Right lobe of liver (tissue), 6 donors: ENCODE measurements at regions of chr16 and their contacts with region 1.

Region 1: DNA sequence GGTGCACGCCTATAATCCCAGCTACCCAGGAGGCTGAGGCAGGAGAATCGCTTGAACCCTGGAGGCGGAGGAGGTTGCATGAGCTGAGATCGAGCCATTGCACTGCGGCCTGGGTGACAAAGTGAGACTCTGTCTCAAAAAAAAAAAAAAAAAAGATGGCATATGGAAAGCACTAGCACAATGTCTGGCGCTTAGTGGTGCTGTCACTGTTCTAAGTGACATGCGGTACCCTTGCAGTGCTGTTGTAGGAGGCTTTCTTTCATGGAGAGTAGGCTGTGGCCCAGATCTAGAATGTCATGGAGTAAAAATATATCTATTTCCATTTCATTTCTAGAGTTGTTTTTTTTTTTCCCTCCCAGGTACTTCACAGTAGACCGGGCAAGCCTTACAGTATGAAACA is 14.6 kb upstream of the METTL9 start:
- DNase-seq: no peak
- ATAC-seq: no peak
- H3K4me3 ChIP-seq: no peak overlapping the region
- H3K27ac ChIP-seq: no peak overlapping the region
- H3K4me1 ChIP-seq: no peaks in the 10 kb centered on the region
- H3K27me3 ChIP-seq: no peaks in the 10 kb centered on the region
- CTCF ChIP-seq: no peak
- POLR2A ChIP-seq: no peak

Region 2: GRCh38 chr16:21638573-21638975 is 53.8 kb after region 1 on chr16:
- intact Hi-C with region 1: loop called (anchors 5 to 10 kb)
- DNase-seq: no peak
- ATAC-seq: peak; percentile 40 to 74 (median 58)
- H3K4me3 ChIP-seq: no peak overlapping the region
- H3K27ac ChIP-seq: no peak overlapping the region
- H3K4me1 ChIP-seq: peaks cover 0 to 12% (median 0%) of the 10 kb centered on the region in 4 donors
- H3K27me3 ChIP-seq: no peaks in the 10 kb centered on the region
- CTCF ChIP-seq: no peak
- POLR2A ChIP-seq: no peak

Region 3: DNA sequence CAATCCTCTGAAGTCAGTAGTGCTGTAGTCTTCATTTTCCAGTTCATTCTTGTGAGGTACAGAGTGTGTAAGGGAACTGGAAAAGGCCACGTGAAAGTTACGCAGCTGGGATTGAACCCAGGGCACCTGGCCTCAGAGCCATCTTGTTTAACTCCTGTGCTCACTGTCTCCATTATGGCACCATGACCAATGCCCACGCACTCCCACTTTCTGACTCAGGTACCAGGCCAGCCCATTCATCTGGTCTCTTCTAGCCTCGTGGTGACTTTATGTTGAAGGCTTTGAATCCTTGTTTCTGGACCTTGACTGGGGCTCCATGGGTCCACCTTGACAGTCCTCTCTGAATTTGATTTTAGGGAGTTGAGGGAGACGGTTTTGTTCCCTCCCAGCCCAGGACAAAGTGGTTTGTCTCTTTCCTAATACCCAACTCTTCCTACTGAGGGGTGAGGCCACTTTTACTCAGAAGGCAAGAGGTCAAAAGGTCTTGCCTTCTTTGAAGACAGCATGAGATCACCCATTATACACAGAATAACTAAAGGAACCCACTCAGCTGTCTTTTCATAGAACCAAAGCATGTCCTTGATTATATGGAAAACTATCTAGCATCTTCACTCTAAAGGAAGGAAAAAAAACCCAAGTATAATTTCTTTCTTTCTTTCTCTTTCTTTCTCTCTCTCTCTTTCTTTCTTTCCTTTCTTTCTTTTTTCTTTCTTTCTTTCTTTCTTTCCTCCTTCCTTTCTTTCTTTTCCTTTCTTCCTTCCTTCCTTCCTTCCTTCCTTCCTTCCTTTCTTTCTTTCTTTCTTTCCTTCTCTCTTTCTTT is 128.9 kb after region 1 on chr16:
- intact Hi-C with region 1: loop called in 1 of 2 experiments (anchors 10 kb)
- DNase-seq: no peak
- ATAC-seq: no peak
- H3K4me3 ChIP-seq: no peak overlapping the region
- H3K27ac ChIP-seq: no peak overlapping the region
- H3K4me1 ChIP-seq: no peaks in the 10 kb centered on the region
- H3K27me3 ChIP-seq: no peaks in the 10 kb centered on the region
- CTCF ChIP-seq: no peak
- POLR2A ChIP-seq: no peak

Region 4: GRCh38 chr16:22699356-22699755 is 1114.5 kb after region 1 on chr16:
- intact Hi-C with region 1: loop called in 1 of 2 experiments (anchors 2 kb)
- DNase-seq: no peak
- ATAC-seq: no peak
- H3K4me3 ChIP-seq: no peak overlapping the region
- H3K27ac ChIP-seq: no peak overlapping the region
- H3K4me1 ChIP-seq: no peaks in the 10 kb centered on the region
- H3K27me3 ChIP-seq: no peaks in the 10 kb centered on the region
- CTCF ChIP-seq: no peak
- POLR2A ChIP-seq: no peak